ENCODE measurements at regions of chr2 and their contacts with region 1.

Region 1: GRCh38 chr2:69601179-69601612 is 42.3 kb downstream of the AAK1 start:
- DNase-seq: peak in 2 of 3 donors; percentile 23 to 36
- H3K4me3 ChIP-seq: no peak overlapping the region
- H3K27ac ChIP-seq: no peak overlapping the region
- H3K4me1 ChIP-seq: peaks cover 0 to 9% (median 3%) of the 10 kb centered on the region in 4 experiments
- H3K27me3 ChIP-seq: no peaks in the 10 kb centered on the region

Region 2: DNA sequence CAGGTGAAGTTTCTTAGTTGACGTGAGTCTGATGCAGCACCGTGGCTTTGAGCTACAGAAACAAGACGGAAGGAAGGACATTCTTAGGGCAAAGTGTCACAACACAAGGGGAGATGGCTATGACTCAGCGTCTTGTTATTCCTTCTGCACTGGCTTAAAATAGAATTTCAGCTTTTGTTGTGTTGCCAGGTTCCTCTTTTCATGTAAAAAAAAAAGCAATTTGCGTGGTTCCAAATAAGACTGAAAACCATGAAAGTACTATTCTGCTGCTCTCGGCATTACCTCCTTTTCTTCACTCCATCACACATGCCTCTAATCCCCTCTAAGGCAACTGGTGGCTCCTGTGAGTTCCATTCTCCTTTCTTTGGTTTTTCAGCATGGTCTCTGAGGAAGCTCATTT is 438.1 kb before region 1 on chr2:
- CTCF ChIA-PET with region 1: no interaction called
- POLR2A ChIA-PET with region 1: no interaction called
- DNase-seq: peak; percentile 70 to 96 (median 90)
- H3K4me3 ChIP-seq: peak overlapping the region in 3 of 7 experiments; percentile 16 to 54 (median 39)
- H3K27ac ChIP-seq: no peak overlapping the region
- H3K4me1 ChIP-seq: peaks cover 23 to 37% (median 31%) of the 10 kb centered on the region in 4 experiments
- H3K27me3 ChIP-seq: peaks cover 0 to 2% (median 0%) of the 10 kb centered on the region in 5 experiments

Region 3: GRCh38 chr2:69581774-69582581 is 19.2 kb before region 1 on chr2:
- CTCF ChIA-PET with region 1: interaction called, 17 read pairs
- POLR2A ChIA-PET with region 1: no interaction called
- DNase-seq: peak; percentile 84 to 95 (median 92)
- H3K4me3 ChIP-seq: peak overlapping the region in 5 of 7 experiments; percentile 13 to 70 (median 58)
- H3K27ac ChIP-seq: peak overlapping the region in 1 of 2 experiments; percentile 69
- H3K4me1 ChIP-seq: peaks cover 24 to 75% (median 47%) of the 10 kb centered on the region in 4 experiments
- H3K27me3 ChIP-seq: no peaks in the 10 kb centered on the region